Esophagus muscularis mucosa (tissue), 4 donors: ENCODE measurements at regions of chr1 and their contacts with region 1.

Region 1: DNA sequence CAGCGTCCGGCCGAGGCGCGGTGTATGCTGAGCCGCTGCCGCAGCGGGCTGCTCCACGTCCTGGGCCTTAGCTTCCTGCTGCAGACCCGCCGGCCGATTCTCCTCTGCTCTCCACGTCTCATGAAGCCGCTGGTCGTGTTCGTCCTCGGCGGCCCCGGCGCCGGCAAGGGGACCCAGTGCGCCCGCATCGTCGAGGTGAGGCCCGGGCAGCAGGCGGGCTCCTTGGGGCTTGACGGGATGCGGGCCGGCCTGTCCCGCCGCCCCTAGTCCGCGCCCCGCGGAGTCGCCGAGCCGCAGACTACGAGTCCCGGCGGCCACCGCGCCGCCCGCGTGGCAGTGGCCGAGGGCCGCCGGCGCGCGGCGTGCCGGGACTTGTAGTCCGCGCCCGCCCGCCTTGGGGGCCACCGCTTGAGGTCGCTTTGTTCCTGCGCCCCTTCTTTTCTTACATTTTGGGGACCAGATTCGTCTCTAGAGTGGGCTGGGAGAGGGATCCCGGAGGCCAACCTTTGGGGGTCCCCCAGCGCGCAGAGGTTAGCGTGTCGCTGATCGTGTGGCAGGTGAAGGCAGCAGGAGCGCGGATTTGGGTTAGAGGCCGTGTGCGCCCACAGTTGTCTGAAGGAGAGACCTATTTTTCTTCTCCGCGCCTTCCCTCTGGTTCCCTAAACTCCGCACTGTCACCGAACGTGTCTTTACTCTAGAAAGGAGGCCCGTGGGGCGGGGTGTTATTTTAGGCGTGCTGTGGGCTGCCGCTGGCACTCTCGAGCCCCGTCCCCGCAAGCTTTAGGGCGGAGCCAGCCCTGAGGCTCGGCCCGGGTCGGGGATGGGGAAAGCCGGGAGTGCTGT is 553 bp downstream of the CMPK1 start:
- DNase-seq: peak; percentile 95
- H3K4me3 ChIP-seq: peak overlapping the region; percentile 92 to 98 (median 96)
- H3K27ac ChIP-seq: peak overlapping the region; percentile 99
- H3K4me1 ChIP-seq: peaks cover 24 to 57% (median 54%) of the 10 kb centered on the region in 4 donors
- H3K27me3 ChIP-seq: no peaks in the 10 kb centered on the region
- CTCF ChIP-seq: peak; percentile 28 to 33 (median 32)
- EP300 ChIP-seq: no peak
- POLR2A ChIP-seq: no peak

Region 2: DNA sequence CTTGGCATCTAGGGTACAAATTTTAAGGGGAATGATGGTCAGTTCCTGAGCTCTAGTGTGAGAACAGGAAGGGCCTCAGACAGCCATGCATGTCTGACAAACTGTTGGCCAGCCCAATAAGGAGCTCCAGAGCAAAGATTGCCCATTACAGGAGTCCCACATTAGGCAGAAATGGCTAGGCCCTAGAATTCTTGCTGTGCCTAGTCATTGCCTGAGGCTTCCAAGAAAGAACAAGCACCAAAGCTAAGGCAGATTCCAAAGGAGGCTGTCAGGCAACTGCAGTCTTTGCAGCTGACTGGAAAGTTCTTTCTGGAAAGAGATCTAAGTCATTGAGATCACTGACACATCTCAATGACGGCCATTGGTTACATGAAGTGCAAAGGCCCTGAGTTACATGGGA is 16.3 kb before region 1 on chr1:
- intact Hi-C with region 1: loop called (anchors 2 kb)
- DNase-seq: no peak
- H3K4me3 ChIP-seq: no peak overlapping the region
- H3K27ac ChIP-seq: no peak overlapping the region
- H3K4me1 ChIP-seq: peaks cover 7 to 10% (median 10%) of the 10 kb centered on the region in 4 donors
- H3K27me3 ChIP-seq: no peaks in the 10 kb centered on the region
- CTCF ChIP-seq: no peak
- EP300 ChIP-seq: no peak
- POLR2A ChIP-seq: no peak

Region 3: DNA sequence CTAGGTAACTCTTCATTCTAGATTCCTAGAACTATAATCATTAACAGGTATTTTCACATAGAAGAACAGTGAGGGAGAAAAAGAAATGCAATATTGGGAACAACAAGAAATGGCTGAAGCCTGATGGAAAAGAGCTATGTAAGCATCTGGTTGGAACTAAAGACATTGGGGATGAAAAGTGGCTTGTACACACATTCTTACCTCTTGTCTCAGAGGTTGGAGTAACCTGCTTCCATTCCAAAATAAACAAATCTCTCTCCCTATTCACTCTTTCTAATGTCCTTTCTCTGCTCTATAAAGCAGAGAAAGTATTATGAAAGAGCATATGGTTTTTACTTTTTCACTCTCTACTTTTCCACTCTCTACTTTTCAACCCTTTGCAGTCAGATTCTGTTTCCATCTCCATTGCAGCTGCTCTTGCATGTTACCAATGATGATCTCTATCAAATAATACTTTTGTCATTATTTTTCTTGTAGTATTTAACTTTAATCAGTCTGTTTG is 36.9 kb after region 1 on chr1:
- intact Hi-C with region 1: no loop called
- DNase-seq: no peak
- H3K4me3 ChIP-seq: no peak overlapping the region
- H3K27ac ChIP-seq: no peak overlapping the region
- H3K4me1 ChIP-seq: no peaks in the 10 kb centered on the region
- H3K27me3 ChIP-seq: no peaks in the 10 kb centered on the region
- CTCF ChIP-seq: no peak
- EP300 ChIP-seq: no peak
- POLR2A ChIP-seq: no peak